ENCODE measurements at regions of chr6 and their contacts with region 1.

Region 1: DNA sequence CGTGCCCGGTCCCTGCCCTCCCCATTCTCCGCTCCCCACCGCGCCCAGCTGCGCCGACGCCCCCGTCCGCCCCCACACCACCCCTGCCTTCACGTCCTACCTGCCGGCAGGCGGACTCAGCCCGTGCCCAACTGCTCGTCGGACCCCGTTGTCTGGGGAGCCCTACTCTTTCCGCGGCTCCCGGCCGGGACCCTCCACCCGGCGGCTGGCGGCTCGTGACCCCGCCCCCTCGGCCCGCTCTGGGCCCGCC is at the start of gene SERAC1:
- DNase-seq: no peak
- H3K4me3 ChIP-seq: peak within 1 kb of the TSS; percentile 74 to 96 (median 91)
- H3K4me3 Mint-ChIP-seq: peak within 1 kb of the TSS; percentile 94 to 95
- H3K27ac ChIP-seq: peak within 1 kb of the TSS; percentile 85 to 93
- H3K27ac Mint-ChIP-seq: peak within 1 kb of the TSS; percentile 91 to 96 (median 95)
- H3K4me1 ChIP-seq: peaks cover 13 to 14% of the 10 kb centered on the region in 2 donors
- H3K4me1 Mint-ChIP-seq: peaks cover 10% of the 10 kb centered on the region
- H3K27me3 ChIP-seq: no peaks in the 10 kb centered on the region
- H3K27me3 Mint-ChIP-seq: peaks cover 0 to 12% (median 2%) of the 10 kb centered on the region in 3 donors
- CTCF ChIP-seq: no peak
- polyA plus RNA-seq, gene SERAC1: 4.3 to 5.1 (median 4.4) TPM

Region 2: GRCh38 chr6:157323255-157323965 is 844.6 kb before region 1 on chr6 and contains the start of gene TMEM242:
- intact Hi-C with region 1: loop called in 1 of 2 experiments (anchors 5 kb)
- DNase-seq: peak; percentile 87 to 92 (median 87)
- H3K4me3 ChIP-seq: peak within 1 kb of the TSS; percentile 63 to 87 (median 74)
- H3K4me3 Mint-ChIP-seq: peak within 1 kb of the TSS; percentile 98 to 99
- H3K27ac ChIP-seq: peak within 1 kb of the TSS; percentile 87 to 90
- H3K27ac Mint-ChIP-seq: peak within 1 kb of the TSS; percentile 92 to 98 (median 97)
- H3K4me1 ChIP-seq: peaks cover 14 to 18% of the 10 kb centered on the region in 2 donors
- H3K4me1 Mint-ChIP-seq: peaks cover 14% of the 10 kb centered on the region
- H3K27me3 ChIP-seq: peaks cover 2 to 10% of the 10 kb centered on the region in 2 donors
- H3K27me3 Mint-ChIP-seq: peaks cover 5 to 18% (median 8%) of the 10 kb centered on the region in 3 donors
- CTCF ChIP-seq: peak; percentile 17
- polyA plus RNA-seq, gene TMEM242: 5.6 to 9.8 (median 8.3) TPM

Region 3: GRCh38 chr6:158086504-158087223 is 81.3 kb before region 1 on chr6:
- intact Hi-C with region 1: loop called in 1 of 2 experiments (anchors 10 kb)
- DNase-seq: peak; percentile 73 to 78 (median 75)
- H3K4me3 ChIP-seq: peak overlapping the region; percentile 40 to 76 (median 58)
- H3K4me3 Mint-ChIP-seq: peak overlapping the region; percentile 83 to 90
- H3K27ac ChIP-seq: peak overlapping the region; percentile 95 to 99
- H3K27ac Mint-ChIP-seq: peak overlapping the region; percentile 94 to 99 (median 98)
- H3K4me1 ChIP-seq: peaks cover 51 to 61% of the 10 kb centered on the region in 2 donors
- H3K4me1 Mint-ChIP-seq: peaks cover 68% of the 10 kb centered on the region
- H3K27me3 ChIP-seq: no peaks in the 10 kb centered on the region
- H3K27me3 Mint-ChIP-seq: peaks cover 0 to 3% (median 1%) of the 10 kb centered on the region in 3 donors
- CTCF ChIP-seq: no peak

Measured in CD14-positive monocyte (primary cell).